ENCODE measurements at regions of chr19 and their contacts with region 1.

Region 1: GRCh38 chr19:5234412-5234811 is 106.2 kb downstream of the PTPRS start:
- DNase-seq: peak in 1 of 10 donors; percentile 3
- ATAC-seq: no peak
- H3K4me3 Mint-ChIP-seq: no peak overlapping the region
- H3K27ac Mint-ChIP-seq: no peak overlapping the region
- H3K4me1 Mint-ChIP-seq: peaks cover 0 to 7% (median 3%) of the 10 kb centered on the region in 4 donors
- H3K27me3 Mint-ChIP-seq: peaks cover 2 to 9% (median 5%) of the 10 kb centered on the region in 5 donors

Region 2: GRCh38 chr19:5186293-5187050 is 47.9 kb before region 1 on chr19:
- POLR2A ChIA-PET with region 1: no interaction called
- DNase-seq: no peak
- ATAC-seq: no peak
- H3K4me3 Mint-ChIP-seq: no peak overlapping the region
- H3K27ac Mint-ChIP-seq: no peak overlapping the region
- H3K4me1 Mint-ChIP-seq: peaks cover 0 to 3% (median 0%) of the 10 kb centered on the region in 4 donors
- H3K27me3 Mint-ChIP-seq: peaks cover 5 to 15% (median 8%) of the 10 kb centered on the region in 5 donors

Region 3: GRCh38 chr19:5205381-5205780 is 29.0 kb before region 1 on chr19:
- POLR2A ChIA-PET with region 1: interaction called, 12 read pairs
- DNase-seq: peak in 6 of 10 donors; percentile 9 to 68 (median 18)
- ATAC-seq: peak; percentile 54 to 72
- H3K4me3 Mint-ChIP-seq: peak overlapping the region in 9 of 10 donors; percentile 14 to 83 (median 55)
- H3K27ac Mint-ChIP-seq: peak overlapping the region in 7 of 10 donors; percentile 31 to 86 (median 66)
- H3K4me1 Mint-ChIP-seq: peaks cover 0 to 15% (median 1%) of the 10 kb centered on the region in 4 donors
- H3K27me3 Mint-ChIP-seq: no peaks in the 10 kb centered on the region

Region 4: GRCh38 chr19:5403968-5404640 is 169.7 kb after region 1 on chr19:
- POLR2A ChIA-PET with region 1: no interaction called
- DNase-seq: peak; percentile 29 to 77 (median 46)
- ATAC-seq: peak; percentile 58 to 64
- H3K4me3 Mint-ChIP-seq: no peak overlapping the region
- H3K27ac Mint-ChIP-seq: no peak overlapping the region
- H3K4me1 Mint-ChIP-seq: peaks cover 0 to 4% (median 0%) of the 10 kb centered on the region in 4 donors
- H3K27me3 Mint-ChIP-seq: peaks cover 14 to 53% (median 29%) of the 10 kb centered on the region in 5 donors